CD4-positive, alpha-beta T cell (primary cell): ENCODE measurements at regions of chr2 and their contacts with region 1.

Region 1: DNA sequence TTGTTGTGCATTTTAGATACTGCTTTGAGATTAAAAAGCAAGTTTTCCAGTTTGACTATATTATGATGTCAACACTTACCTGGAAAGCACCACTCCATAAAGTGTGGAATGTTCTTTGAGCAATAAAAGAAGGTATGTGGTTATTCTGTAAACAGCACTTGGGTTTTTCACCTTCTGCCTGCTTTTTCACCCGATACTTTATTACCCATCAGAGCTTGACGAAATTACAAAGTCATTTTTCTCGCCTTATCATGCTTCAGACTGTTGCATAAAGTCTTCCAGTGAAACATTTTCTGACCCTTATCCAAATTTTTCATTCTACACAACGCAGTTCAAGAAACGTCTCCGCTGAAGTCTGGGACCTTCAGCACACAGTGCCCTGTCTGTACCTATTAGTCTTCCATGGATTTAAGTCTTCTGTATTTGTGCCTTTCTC is 25.2 kb downstream of the CAB39 start:
- DNase-seq: no peak
- ATAC-seq: no peak
- H3K4me3 ChIP-seq: no peak overlapping the region
- H3K4me3 Mint-ChIP-seq: peak overlapping the region; percentile 30
- H3K27ac ChIP-seq: no peak overlapping the region
- H3K27ac Mint-ChIP-seq: peak overlapping the region; percentile 70
- H3K4me1 ChIP-seq: peaks cover 45% of the 10 kb centered on the region
- H3K4me1 Mint-ChIP-seq: peaks cover 86% of the 10 kb centered on the region
- H3K27me3 ChIP-seq: no peaks in the 10 kb centered on the region
- H3K27me3 Mint-ChIP-seq: no peaks in the 10 kb centered on the region
- CTCF ChIP-seq: no peak

Region 2: DNA sequence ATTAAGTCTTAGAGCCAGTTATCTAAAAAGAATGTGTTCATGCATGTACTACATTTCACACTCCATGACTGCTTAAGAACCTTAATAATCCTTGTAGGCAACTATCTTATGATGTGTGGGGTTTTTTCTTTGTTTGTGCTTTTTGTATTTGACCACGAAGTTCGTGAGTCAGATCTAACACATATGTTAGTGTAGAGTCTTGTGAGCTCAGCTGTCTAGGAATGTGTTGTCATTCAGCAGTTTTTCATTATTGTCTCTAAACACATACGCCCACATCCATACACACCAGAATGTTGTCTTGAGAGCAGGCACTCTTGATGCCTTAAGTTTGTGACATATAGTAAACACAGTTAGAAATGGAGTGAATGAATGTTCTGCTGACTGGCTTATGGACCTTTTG is 13.3 kb after region 1 on chr2:
- CTCF ChIA-PET with region 1: no interaction called
- POLR2A ChIA-PET with region 1: no interaction called
- intact Hi-C with region 1: loop called in 1 of 2 experiments (anchors 2 kb)
- DNase-seq: peak in 1 of 14 experiments; percentile 21
- ATAC-seq: peak; percentile 39
- H3K4me3 ChIP-seq: no peak overlapping the region
- H3K4me3 Mint-ChIP-seq: no peak overlapping the region
- H3K27ac ChIP-seq: no peak overlapping the region
- H3K27ac Mint-ChIP-seq: peak overlapping the region; percentile 68
- H3K4me1 ChIP-seq: peaks cover 12% of the 10 kb centered on the region
- H3K4me1 Mint-ChIP-seq: peaks cover 89% of the 10 kb centered on the region
- H3K27me3 ChIP-seq: no peaks in the 10 kb centered on the region
- H3K27me3 Mint-ChIP-seq: no peaks in the 10 kb centered on the region
- CTCF ChIP-seq: no peak

Region 3: GRCh38 chr2:230814616-230815015 is 76.8 kb after region 1 on chr2:
- CTCF ChIA-PET with region 1: no interaction called
- POLR2A ChIA-PET with region 1: no interaction called
- intact Hi-C with region 1: no loop called
- DNase-seq: peak in 2 of 14 experiments; percentile 16 to 33
- ATAC-seq: peak; percentile 34
- H3K4me3 ChIP-seq: no peak overlapping the region
- H3K4me3 Mint-ChIP-seq: no peak overlapping the region
- H3K27ac ChIP-seq: no peak overlapping the region
- H3K27ac Mint-ChIP-seq: peak overlapping the region; percentile 71
- H3K4me1 ChIP-seq: no peaks in the 10 kb centered on the region
- H3K4me1 Mint-ChIP-seq: peaks cover 25% of the 10 kb centered on the region
- H3K27me3 ChIP-seq: no peaks in the 10 kb centered on the region
- H3K27me3 Mint-ChIP-seq: no peaks in the 10 kb centered on the region
- CTCF ChIP-seq: peak; percentile 27